Esophagus muscularis mucosa (tissue), 4 donors: ENCODE measurements at regions of chr7 and their contacts with region 1.

Region 1: GRCh38 chr7:27210441-27211083 is 10.7 kb upstream of the HOXA13 start:
- DNase-seq: no peak
- H3K4me3 ChIP-seq: peak overlapping the region; percentile 29 to 49 (median 42)
- H3K27ac ChIP-seq: no peak overlapping the region
- H3K4me1 ChIP-seq: peaks cover 17 to 33% (median 23%) of the 10 kb centered on the region in 4 donors
- H3K27me3 ChIP-seq: peaks cover 3 to 100% (median 53%) of the 10 kb centered on the region in 4 donors
- CTCF ChIP-seq: peak; percentile 53 to 90 (median 70)
- EP300 ChIP-seq: no peak
- POLR2A ChIP-seq: no peak

Region 2: GRCh38 chr7:27300421-27300820 is 89.9 kb after region 1 on chr7:
- intact Hi-C with region 1: no loop called
- DNase-seq: no peak
- H3K4me3 ChIP-seq: no peak overlapping the region
- H3K27ac ChIP-seq: no peak overlapping the region
- H3K4me1 ChIP-seq: no peaks in the 10 kb centered on the region
- H3K27me3 ChIP-seq: peaks cover 0 to 9% (median 0%) of the 10 kb centered on the region in 4 donors
- CTCF ChIP-seq: no peak
- EP300 ChIP-seq: no peak
- POLR2A ChIP-seq: no peak

Region 3: GRCh38 chr7:27576360-27576944 is 365.9 kb after region 1 on chr7:
- intact Hi-C with region 1: loop called (anchors 5 kb)
- DNase-seq: no peak
- H3K4me3 ChIP-seq: no peak overlapping the region
- H3K27ac ChIP-seq: no peak overlapping the region
- H3K4me1 ChIP-seq: no peaks in the 10 kb centered on the region
- H3K27me3 ChIP-seq: no peaks in the 10 kb centered on the region
- CTCF ChIP-seq: peak; percentile 54 to 67 (median 57)
- EP300 ChIP-seq: no peak
- POLR2A ChIP-seq: no peak